Activated B cell treated with CpG ODN at 0.5 μM for 24 hours (primary cell): ENCODE measurements at regions of chr10 and their contacts with region 1.

Region 1: GRCh38 chr10:14884082-14884481 is 5.4 kb downstream of the SUV39H2 start:
- DNase-seq: no peak
- ATAC-seq: no peak
- H3K4me3 Mint-ChIP-seq: no peak overlapping the region
- H3K27ac Mint-ChIP-seq: no peak overlapping the region
- H3K4me1 Mint-ChIP-seq: peaks cover 10% of the 10 kb centered on the region
- H3K27me3 Mint-ChIP-seq: no peaks in the 10 kb centered on the region
- CTCF ChIP-seq: no peak

Region 2: GRCh38 chr10:14523286-14523685 is 360.8 kb before region 1 on chr10:
- CTCF ChIA-PET with region 1: no interaction called
- POLR2A ChIA-PET with region 1: interaction called, 12 read pairs
- intact Hi-C with region 1: no loop called
- DNase-seq: no peak
- ATAC-seq: no peak
- H3K4me3 Mint-ChIP-seq: no peak overlapping the region
- H3K27ac Mint-ChIP-seq: no peak overlapping the region
- H3K4me1 Mint-ChIP-seq: peaks cover 10% of the 10 kb centered on the region
- H3K27me3 Mint-ChIP-seq: no peaks in the 10 kb centered on the region
- CTCF ChIP-seq: no peak

Region 3: DNA sequence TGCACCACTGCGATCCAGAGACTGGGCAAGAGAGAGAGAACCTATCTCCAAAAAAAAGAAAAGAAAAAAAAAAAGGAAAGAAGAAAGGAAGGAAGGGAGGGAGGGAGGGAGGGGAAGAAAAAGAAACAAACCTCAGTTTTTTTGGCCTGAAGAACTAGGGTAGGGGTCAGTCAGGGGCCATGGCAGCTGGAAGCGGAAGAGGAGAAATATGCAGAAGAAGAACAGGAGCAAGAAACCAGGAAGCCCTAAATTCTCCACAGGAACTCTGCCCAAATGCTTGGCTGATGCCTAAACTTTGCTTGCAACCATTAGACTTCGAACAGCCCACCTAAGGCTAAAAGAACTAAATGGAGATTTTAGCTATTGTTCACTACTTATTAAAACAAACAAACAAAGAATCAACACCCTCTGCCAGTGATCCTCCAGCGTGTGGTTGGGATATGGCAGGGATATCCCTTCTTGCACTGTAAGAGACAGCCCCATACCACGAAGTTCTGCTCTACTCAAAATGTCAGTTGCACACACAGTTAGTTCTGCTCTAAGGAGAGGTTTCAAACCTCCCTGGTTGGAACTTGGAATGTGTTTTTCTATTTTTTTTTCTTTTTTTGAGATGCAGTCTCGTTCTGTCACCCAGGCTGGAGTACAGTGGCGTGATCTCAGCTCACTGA is 248.9 kb before region 1 on chr10:
- CTCF ChIA-PET with region 1: no interaction called
- POLR2A ChIA-PET with region 1: no interaction called
- intact Hi-C with region 1: no loop called
- DNase-seq: no peak
- ATAC-seq: no peak
- H3K4me3 Mint-ChIP-seq: no peak overlapping the region
- H3K27ac Mint-ChIP-seq: no peak overlapping the region
- H3K4me1 Mint-ChIP-seq: peaks cover 9% of the 10 kb centered on the region
- H3K27me3 Mint-ChIP-seq: no peaks in the 10 kb centered on the region
- CTCF ChIP-seq: no peak

Region 4: GRCh38 chr10:15035385-15036301 is 151.6 kb after region 1 on chr10:
- CTCF ChIA-PET with region 1: no interaction called
- POLR2A ChIA-PET with region 1: no interaction called
- intact Hi-C with region 1: no loop called
- DNase-seq: no peak
- ATAC-seq: no peak
- H3K4me3 Mint-ChIP-seq: no peak overlapping the region
- H3K27ac Mint-ChIP-seq: no peak overlapping the region
- H3K4me1 Mint-ChIP-seq: no peaks in the 10 kb centered on the region
- H3K27me3 Mint-ChIP-seq: peaks cover 6% of the 10 kb centered on the region
- CTCF ChIP-seq: no peak

Region 5: GRCh38 chr10:15106352-15107013 is 222.4 kb after region 1 on chr10:
- CTCF ChIA-PET with region 1: no interaction called
- POLR2A ChIA-PET with region 1: no interaction called
- intact Hi-C with region 1: no loop called
- DNase-seq: peak; percentile 32
- ATAC-seq: peak; percentile 96
- H3K4me3 Mint-ChIP-seq: no peak overlapping the region
- H3K27ac Mint-ChIP-seq: no peak overlapping the region
- H3K4me1 Mint-ChIP-seq: peaks cover 8% of the 10 kb centered on the region
- H3K27me3 Mint-ChIP-seq: no peaks in the 10 kb centered on the region
- CTCF ChIP-seq: peak; percentile 51